OCI-LY7 (cell line): ENCODE measurements at regions of chr3 and their contacts with region 1.

Region 1: GRCh38 chr3:75650191-75650590 is 13.9 kb upstream of the FRG2C start:
- DNase-seq: no peak
- H3K4me3 ChIP-seq: no peak overlapping the region
- H3K27ac ChIP-seq: no peak overlapping the region
- H3K4me1 ChIP-seq: no peaks in the 10 kb centered on the region
- CTCF ChIP-seq: no peak

Region 2: DNA sequence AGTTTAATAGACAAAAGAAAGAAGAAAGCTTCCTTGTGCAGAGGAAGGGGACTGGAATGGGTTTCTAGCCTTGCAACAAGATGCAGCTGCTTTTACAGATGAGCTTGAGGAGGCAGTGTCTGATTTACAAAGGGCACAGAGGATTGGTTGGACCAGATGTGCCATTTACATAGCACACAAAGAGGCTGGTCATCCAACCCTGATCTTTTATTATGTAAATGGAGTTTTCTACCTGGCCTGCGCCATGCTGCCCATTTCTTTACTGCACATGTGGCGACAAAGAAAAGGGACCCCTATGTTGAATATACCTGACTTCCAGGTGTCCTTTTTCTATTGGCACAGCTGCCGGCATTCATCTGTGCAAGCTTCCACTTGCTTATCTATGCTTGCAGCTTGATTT is 395.5 kb before region 1 on chr3:
- CTCF ChIA-PET with region 1: no interaction called
- POLR2A ChIA-PET with region 1: no interaction called
- intact Hi-C with region 1: loop called (anchors 10 kb)
- DNase-seq: no peak
- H3K4me3 ChIP-seq: no peak overlapping the region
- H3K27ac ChIP-seq: no peak overlapping the region
- H3K4me1 ChIP-seq: no peaks in the 10 kb centered on the region
- CTCF ChIP-seq: no peak

Region 3: GRCh38 chr3:75610773-75611172 is 39.4 kb before region 1 on chr3:
- CTCF ChIA-PET with region 1: no interaction called
- POLR2A ChIA-PET with region 1: no interaction called
- intact Hi-C with region 1: no loop called
- DNase-seq: no peak
- H3K4me3 ChIP-seq: no peak overlapping the region
- H3K27ac ChIP-seq: no peak overlapping the region
- H3K4me1 ChIP-seq: no peaks in the 10 kb centered on the region
- CTCF ChIP-seq: no peak

Region 4: DNA sequence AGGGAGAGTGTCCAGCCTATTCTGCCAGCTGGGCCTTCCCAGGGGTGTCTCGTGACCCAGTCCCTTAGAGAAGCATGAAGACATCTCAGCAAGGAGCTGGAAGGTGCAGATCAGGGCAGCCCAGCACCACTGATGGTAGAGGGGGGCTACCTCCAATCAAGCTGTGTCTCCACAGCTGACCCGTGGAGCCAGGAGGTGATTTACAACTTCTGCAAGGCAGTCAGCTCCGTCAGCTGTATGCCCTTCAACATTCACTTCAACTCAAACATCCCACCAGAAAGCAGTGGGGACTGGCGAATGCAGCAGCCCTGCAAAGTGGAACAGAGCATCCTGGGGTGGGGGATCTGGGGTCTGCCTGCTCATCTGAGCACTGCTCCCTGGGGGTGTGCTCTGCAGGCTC is 18.6 kb before region 1 on chr3:
- CTCF ChIA-PET with region 1: no interaction called
- POLR2A ChIA-PET with region 1: no interaction called
- intact Hi-C with region 1: no loop called
- DNase-seq: no peak
- H3K4me3 ChIP-seq: no peak overlapping the region
- H3K27ac ChIP-seq: no peak overlapping the region
- H3K4me1 ChIP-seq: no peaks in the 10 kb centered on the region
- CTCF ChIP-seq: no peak

Region 5: DNA sequence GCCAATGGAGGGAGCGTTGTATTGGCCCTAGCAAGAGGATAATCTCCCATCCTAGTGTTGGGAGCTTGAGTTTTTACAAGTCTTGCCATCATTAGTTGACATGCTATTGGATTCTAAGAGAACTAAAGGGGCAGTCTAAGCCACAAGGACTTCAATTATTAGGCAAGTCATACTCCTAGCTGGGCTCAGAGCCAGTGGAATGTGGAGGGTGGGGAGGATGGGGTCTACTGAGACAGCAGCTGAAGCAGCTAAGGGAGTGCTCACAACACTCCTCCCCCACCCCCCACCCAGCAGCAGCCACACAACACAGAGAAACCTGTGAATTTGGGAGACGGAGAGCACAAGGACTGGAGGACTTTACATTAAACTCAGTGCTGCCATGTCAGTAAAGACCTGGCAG is 41.9 kb after region 1 on chr3:
- CTCF ChIA-PET with region 1: no interaction called
- POLR2A ChIA-PET with region 1: no interaction called
- intact Hi-C with region 1: no loop called
- DNase-seq: no peak
- H3K4me3 ChIP-seq: no peak overlapping the region
- H3K27ac ChIP-seq: no peak overlapping the region
- H3K4me1 ChIP-seq: no peaks in the 10 kb centered on the region
- CTCF ChIP-seq: no peak

Region 6: GRCh38 chr3:75886971-75887526 is 236.9 kb after region 1 on chr3:
- CTCF ChIA-PET with region 1: no interaction called
- POLR2A ChIA-PET with region 1: no interaction called
- intact Hi-C with region 1: no loop called
- DNase-seq: no peak
- H3K4me3 ChIP-seq: no peak overlapping the region
- H3K27ac ChIP-seq: no peak overlapping the region
- H3K4me1 ChIP-seq: no peaks in the 10 kb centered on the region
- CTCF ChIP-seq: no peak